BJ (cell line): ENCODE measurements at regions of chr1 and their contacts with region 1.

Region 1: DNA sequence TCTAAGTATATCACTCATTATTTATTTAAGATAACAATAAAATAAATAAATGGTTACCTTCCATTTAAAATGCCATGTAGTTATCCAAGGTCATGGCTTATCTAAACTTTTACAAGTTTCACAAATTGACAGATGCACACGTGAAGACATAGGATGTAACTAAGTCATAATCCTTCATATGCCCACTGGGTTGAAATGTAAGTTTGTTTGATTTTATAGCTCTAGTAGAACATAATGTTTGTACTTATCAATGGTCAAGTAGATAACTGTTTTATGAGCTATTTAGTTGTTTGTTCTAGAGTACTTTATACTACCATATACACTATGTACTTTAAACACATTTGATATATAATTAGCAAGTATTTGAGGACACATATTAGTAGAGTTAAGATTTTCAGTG is 43.0 kb downstream of the ITGB3BP start:
- DNase-seq: no peak
- H3K4me3 ChIP-seq: no peak overlapping the region
- H3K27me3 ChIP-seq: no peaks in the 10 kb centered on the region
- CTCF ChIP-seq: no peak

Region 2: DNA sequence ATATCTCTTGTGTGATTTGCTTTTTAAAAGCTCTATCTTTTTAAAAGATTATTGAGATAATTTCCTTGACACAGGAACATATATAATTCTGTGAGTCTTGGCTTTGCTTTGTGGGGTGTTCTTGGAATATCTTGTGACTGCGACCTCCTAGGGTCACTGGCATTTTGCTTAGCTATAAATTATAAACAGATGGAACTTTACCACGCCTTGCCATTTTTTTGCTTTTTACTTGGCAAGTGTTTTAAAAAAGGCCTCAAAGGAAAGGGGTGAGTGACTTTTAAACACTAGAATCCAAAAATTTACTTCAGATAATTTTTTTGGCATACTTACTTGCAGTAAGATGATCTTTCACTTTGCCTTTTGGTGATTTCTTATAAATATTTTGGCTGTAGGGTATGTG is 69.0 kb before region 1 on chr1:
- CTCF ChIA-PET with region 1: no interaction called
- POLR2A ChIA-PET with region 1: no interaction called
- DNase-seq: no peak
- H3K4me3 ChIP-seq: no peak overlapping the region
- H3K27me3 ChIP-seq: no peaks in the 10 kb centered on the region
- CTCF ChIP-seq: no peak

Region 3: GRCh38 chr1:64535938-64536835 is 1056.1 kb after region 1 on chr1:
- CTCF ChIA-PET with region 1: no interaction called
- POLR2A ChIA-PET with region 1: interaction called, 11 read pairs
- DNase-seq: no peak
- H3K4me3 ChIP-seq: no peak overlapping the region
- H3K27me3 ChIP-seq: no peaks in the 10 kb centered on the region
- CTCF ChIP-seq: no peak